ENCODE measurements at regions of chr17 and their contacts with region 1.

Region 1: GRCh38 chr17:38667099-38667786 is 7.5 kb downstream of the EPOP start:
- DNase-seq: peak; percentile 79
- H3K4me3 ChIP-seq: no peak overlapping the region
- H3K27ac ChIP-seq: no peak overlapping the region
- H3K4me1 ChIP-seq: no peaks in the 10 kb centered on the region
- H3K27me3 ChIP-seq: no peaks in the 10 kb centered on the region
- CTCF ChIP-seq: peak; percentile 93 to 98 (median 95)
- POLR2A ChIP-seq: no peak

Region 2: DNA sequence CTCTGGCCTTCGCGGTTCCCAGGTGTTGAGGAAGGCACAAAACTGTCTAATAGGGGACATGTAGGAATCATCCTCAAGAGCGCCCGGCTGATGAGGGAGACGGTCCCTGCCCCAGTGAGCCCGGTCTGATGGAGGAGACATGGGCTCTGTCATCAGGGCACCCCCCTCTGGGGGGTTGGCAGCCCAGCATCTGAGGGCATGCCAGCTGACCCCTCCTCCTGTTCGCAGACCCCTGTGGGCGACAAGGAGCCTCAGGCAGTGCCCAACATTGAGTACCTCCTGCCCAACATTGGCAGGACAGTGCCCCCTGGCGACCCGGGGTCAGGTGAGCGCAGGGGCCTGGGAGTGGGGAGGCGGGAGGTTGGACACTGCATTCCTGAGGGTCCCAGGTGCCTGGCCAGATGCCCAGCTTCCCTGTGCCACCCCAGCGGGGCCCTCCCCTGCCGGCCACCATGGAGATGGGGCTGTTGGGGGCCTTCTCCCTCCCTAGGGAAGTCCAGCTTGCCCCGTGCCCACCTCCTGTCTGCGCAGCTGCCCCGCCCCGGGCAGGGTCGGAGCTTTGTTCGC is 169.0 kb before region 1 on chr17:
- intact Hi-C with region 1: loop called (anchors 10 kb)
- DNase-seq: no peak
- H3K4me3 ChIP-seq: no peak overlapping the region
- H3K27ac ChIP-seq: no peak overlapping the region
- H3K4me1 ChIP-seq: no peaks in the 10 kb centered on the region
- H3K27me3 ChIP-seq: no peaks in the 10 kb centered on the region
- CTCF ChIP-seq: no peak
- POLR2A ChIP-seq: no peak

Region 3: GRCh38 chr17:38557836-38558727 is 109.2 kb before region 1 on chr17:
- intact Hi-C with region 1: loop called (anchors 10 kb)
- DNase-seq: peak; percentile 94
- H3K4me3 ChIP-seq: peak overlapping the region; percentile 27 to 48
- H3K27ac ChIP-seq: no peak overlapping the region
- H3K4me1 ChIP-seq: peaks cover 7% of the 10 kb centered on the region
- H3K27me3 ChIP-seq: no peaks in the 10 kb centered on the region
- CTCF ChIP-seq: peak; percentile 85 to 92 (median 91)
- POLR2A ChIP-seq: no peak

Region 4: DNA sequence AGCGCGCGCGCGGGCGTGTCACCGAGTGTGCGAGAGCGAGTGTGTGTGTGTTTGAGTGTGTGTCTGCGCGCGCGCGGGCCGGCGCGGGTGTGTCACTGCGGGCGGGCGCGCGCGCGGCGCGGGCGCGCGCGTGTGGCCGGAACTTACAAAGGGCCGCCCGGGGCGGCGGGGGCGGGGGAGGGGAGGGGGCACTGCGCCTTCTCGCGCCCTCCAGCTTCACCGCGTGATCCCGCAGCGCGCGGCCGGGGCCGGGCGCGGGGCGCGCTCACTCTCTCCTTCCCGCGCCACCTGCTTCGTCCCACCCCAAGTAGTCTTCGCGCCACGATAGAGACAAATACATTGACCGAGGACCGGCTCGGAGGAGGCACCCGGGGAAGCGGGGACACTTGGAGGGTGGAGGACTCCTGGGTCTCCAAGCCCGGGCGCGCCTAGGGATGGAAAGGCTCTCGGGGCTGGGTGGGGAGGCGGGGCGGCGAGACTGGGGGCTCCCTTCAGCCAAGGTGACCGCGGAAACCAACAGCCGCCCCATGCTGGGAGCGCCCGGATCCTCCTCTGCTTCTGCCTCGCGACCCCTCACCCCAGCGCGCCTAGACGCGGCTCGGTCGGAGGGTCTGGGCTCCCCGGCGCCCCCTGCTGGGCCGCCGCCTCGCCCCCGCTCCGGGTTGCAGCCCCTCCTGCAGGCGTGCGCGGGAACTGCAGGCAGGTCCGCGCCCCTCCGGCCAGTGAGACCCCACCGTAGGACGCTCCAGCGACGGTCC is 61.2 kb before region 1 on chr17 and contains the start of gene SRCIN1:
- intact Hi-C with region 1: no loop called
- DNase-seq: peak; percentile 69
- H3K4me3 ChIP-seq: peak within 1 kb of the TSS; percentile 45 to 65
- H3K27ac ChIP-seq: no peak within 1 kb of the TSS
- H3K4me1 ChIP-seq: peaks cover 28% of the 10 kb centered on the region
- H3K27me3 ChIP-seq: no peaks in the 10 kb centered on the region
- CTCF ChIP-seq: peak; percentile 30 to 89 (median 86)
- POLR2A ChIP-seq: no peak
- total RNA-seq, gene SRCIN1: 6.2 to 8.9 TPM

Measured in testis (tissue), 5 donors.